Posterior vena cava (tissue), 2 donors: ENCODE measurements at regions of chr9 and their contacts with region 1.

Region 1: GRCh38 chr9:20854444-20854843 is 170.4 kb downstream of the FOCAD start:
- DNase-seq: no peak

Region 2: GRCh38 chr9:19551124-19551929 is 1303.1 kb before region 1 on chr9:
- intact Hi-C with region 1: no loop called
- DNase-seq: no peak

Region 3: GRCh38 chr9:20865347-20865746 is 10.9 kb after region 1 on chr9:
- intact Hi-C with region 1: no loop called
- DNase-seq: no peak

Region 4: GRCh38 chr9:20914556-20914955 is 60.1 kb after region 1 on chr9:
- intact Hi-C with region 1: loop called in 1 of 2 experiments (anchors 2 kb)
- DNase-seq: no peak